ENCODE measurements at regions of chr7 and their contacts with region 1.

Region 1: GRCh38 chr7:30740424-30741181 is 11.3 kb upstream of the INMT start:
- DNase-seq: peak; percentile 59 to 88 (median 75)
- ATAC-seq: peak; percentile 22 to 80 (median 70)
- H3K4me3 ChIP-seq: no peak overlapping the region
- H3K27ac ChIP-seq: no peak overlapping the region
- H3K4me1 ChIP-seq: peaks cover 0 to 12% (median 5%) of the 10 kb centered on the region in 12 donors
- H3K27me3 ChIP-seq: no peaks in the 10 kb centered on the region
- CTCF ChIP-seq: peak; percentile 95 to 100 (median 99)
- POLR2A ChIP-seq: no peak

Region 2: DNA sequence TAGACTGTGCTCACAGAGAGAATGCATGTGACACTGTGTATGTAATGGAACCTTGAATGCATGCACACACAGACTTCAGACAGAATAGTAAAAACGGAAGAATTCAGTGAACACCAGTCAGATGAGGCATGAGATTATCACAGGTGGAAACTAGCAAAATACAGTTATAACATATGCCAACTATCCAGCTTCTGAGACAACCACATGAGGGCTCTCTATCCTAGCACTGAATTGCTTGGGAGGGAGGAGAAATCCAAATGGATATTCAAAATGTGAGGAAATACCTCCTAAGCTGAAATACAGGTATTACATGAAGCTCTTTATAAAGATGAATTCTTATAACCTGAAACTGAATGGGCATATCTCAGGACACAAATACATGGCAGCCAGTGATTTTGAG is 115.3 kb before region 1 on chr7:
- intact Hi-C with region 1: loop called in 7 of 10 experiments (anchors 2 to 10 kb)
- DNase-seq: no peak
- ATAC-seq: no peak
- H3K4me3 ChIP-seq: no peak overlapping the region
- H3K27ac ChIP-seq: no peak overlapping the region
- H3K4me1 ChIP-seq: no peaks in the 10 kb centered on the region
- H3K27me3 ChIP-seq: no peaks in the 10 kb centered on the region
- CTCF ChIP-seq: peak in 7 of 12 donors; percentile 15 to 46 (median 22)
- POLR2A ChIP-seq: no peak

Region 3: DNA sequence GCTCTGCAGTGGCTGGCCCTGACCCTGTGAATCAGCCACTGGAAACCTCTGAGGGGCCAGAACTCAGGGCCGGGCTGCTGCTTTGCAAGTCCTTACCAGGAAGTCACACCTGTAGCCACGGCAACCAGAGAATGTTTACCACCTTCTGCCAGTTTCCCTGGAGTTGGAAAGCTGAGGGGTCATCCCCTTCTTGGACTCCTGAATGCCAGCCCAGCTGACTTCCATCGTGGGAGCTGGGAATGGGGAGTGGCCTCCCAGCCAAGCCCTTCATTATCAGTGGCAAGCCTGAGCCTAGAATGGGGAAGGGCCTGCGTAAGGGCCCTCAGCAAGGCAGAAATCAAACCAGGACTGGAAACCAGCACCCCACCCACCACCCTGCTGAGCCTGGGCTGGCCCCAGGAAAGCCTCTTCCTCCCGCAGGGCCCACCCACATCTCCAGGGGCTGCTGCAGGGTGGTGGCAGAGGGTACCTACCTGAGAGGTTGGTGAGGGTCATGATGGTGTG is 51.8 kb before region 1 on chr7:
- intact Hi-C with region 1: loop called in 9 of 10 experiments (anchors 2 to 5 kb)
- DNase-seq: no peak
- ATAC-seq: no peak
- H3K4me3 ChIP-seq: no peak overlapping the region
- H3K27ac ChIP-seq: no peak overlapping the region
- H3K4me1 ChIP-seq: peaks cover 0 to 6% (median 0%) of the 10 kb centered on the region in 12 donors
- H3K27me3 ChIP-seq: peaks cover 0 to 7% (median 0%) of the 10 kb centered on the region in 9 donors
- CTCF ChIP-seq: no peak
- POLR2A ChIP-seq: no peak

Region 4: GRCh38 chr7:30717181-30717580 is 23.4 kb before region 1 on chr7:
- intact Hi-C with region 1: no loop called
- DNase-seq: no peak
- ATAC-seq: peak in 2 of 4 donors; percentile 26 to 40
- H3K4me3 ChIP-seq: no peak overlapping the region
- H3K27ac ChIP-seq: no peak overlapping the region
- H3K4me1 ChIP-seq: no peaks in the 10 kb centered on the region
- H3K27me3 ChIP-seq: no peaks in the 10 kb centered on the region
- CTCF ChIP-seq: peak in 1 of 12 donors; percentile 19
- POLR2A ChIP-seq: no peak

Region 5: DNA sequence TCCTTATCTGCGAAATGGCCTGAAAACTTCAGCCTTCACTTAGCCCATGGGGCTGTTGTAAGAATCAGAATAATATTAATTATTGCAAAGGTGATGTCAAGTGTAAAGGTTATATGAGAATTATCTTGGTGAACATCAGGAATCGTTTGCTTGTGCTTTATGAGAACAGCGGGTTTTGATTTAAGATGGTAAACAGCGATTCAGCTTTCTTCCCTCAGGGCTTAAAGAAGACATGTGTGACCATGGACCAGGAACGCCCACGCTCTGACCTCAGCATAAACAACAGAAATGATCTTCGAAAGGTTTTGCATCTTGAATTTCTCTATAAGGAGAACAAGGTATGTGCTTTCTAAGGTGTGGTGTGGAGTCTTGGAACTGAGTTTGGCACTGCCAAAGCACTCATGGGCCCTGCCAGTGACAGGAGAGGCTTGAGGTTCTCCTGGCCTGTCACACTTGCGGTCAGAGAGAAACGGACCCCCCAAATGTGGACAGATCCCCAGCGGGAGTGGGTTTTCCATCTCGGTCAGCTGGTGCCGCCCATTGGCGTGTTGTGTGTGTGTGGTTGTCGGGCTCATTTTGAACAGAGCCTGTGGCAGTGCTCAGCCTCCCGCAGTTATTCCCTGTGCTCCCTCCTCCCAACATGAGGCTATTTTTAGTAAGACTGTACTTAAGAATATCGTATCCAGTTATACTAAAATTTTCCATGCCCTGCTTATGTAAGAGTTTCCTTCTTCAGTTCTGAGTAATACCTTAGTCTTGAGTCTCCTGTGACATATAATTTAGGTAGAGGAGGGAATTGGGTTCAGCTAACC is 37.8 kb after region 1 on chr7:
- intact Hi-C with region 1: loop called in 1 of 10 experiments (anchors 5 kb)
- DNase-seq: peak in 4 of 5 donors; percentile 42 to 65 (median 52)
- ATAC-seq: peak; percentile 61 to 89 (median 84)
- H3K4me3 ChIP-seq: peak overlapping the region in 2 of 12 donors; percentile 5 to 11
- H3K27ac ChIP-seq: peak overlapping the region in 11 of 12 donors; percentile 19 to 86 (median 69)
- H3K4me1 ChIP-seq: peaks cover 0 to 39% (median 12%) of the 10 kb centered on the region in 12 donors
- H3K27me3 ChIP-seq: no peaks in the 10 kb centered on the region
- CTCF ChIP-seq: no peak
- POLR2A ChIP-seq: no peak

Region 6: GRCh38 chr7:30800785-30801252 is 60.2 kb after region 1 on chr7:
- intact Hi-C with region 1: loop called in 2 of 10 experiments (anchors 5 kb)
- DNase-seq: peak in 4 of 5 donors; percentile 46 to 74 (median 61)
- ATAC-seq: peak; percentile 47 to 73 (median 72)
- H3K4me3 ChIP-seq: no peak overlapping the region
- H3K27ac ChIP-seq: peak overlapping the region in 8 of 12 donors; percentile 15 to 62 (median 44)
- H3K4me1 ChIP-seq: peaks cover 0 to 74% (median 45%) of the 10 kb centered on the region in 12 donors
- H3K27me3 ChIP-seq: no peaks in the 10 kb centered on the region
- CTCF ChIP-seq: peak; percentile 47 to 84 (median 76)
- POLR2A ChIP-seq: no peak

Region 7: GRCh38 chr7:30941582-30942309 is 201.1 kb after region 1 on chr7:
- intact Hi-C with region 1: no loop called
- DNase-seq: no peak
- ATAC-seq: no peak
- H3K4me3 ChIP-seq: no peak overlapping the region
- H3K27ac ChIP-seq: no peak overlapping the region
- H3K4me1 ChIP-seq: peaks cover 0 to 14% (median 5%) of the 10 kb centered on the region in 12 donors
- H3K27me3 ChIP-seq: no peaks in the 10 kb centered on the region
- CTCF ChIP-seq: no peak
- POLR2A ChIP-seq: no peak

Region 8: GRCh38 chr7:31122649-31123058 is 382.1 kb after region 1 on chr7:
- intact Hi-C with region 1: loop called in 2 of 10 experiments (anchors 2 to 5 kb)
- DNase-seq: peak in 4 of 5 donors; percentile 50 to 66 (median 57)
- ATAC-seq: peak; percentile 40 to 82 (median 79)
- H3K4me3 ChIP-seq: no peak overlapping the region
- H3K27ac ChIP-seq: no peak overlapping the region
- H3K4me1 ChIP-seq: peaks cover 0 to 5% (median 0%) of the 10 kb centered on the region in 12 donors
- H3K27me3 ChIP-seq: no peaks in the 10 kb centered on the region
- CTCF ChIP-seq: peak; percentile 72 to 94 (median 86)
- POLR2A ChIP-seq: no peak